ENCODE measurements at regions of chr18 and their contacts with region 1.

Region 1: GRCh38 chr18:2822213-2822921 is 24.4 kb upstream of the EMILIN2 start:
- DNase-seq: no peak
- ATAC-seq: no peak
- H3K4me3 ChIP-seq: no peak overlapping the region
- H3K4me3 Mint-ChIP-seq: no peak overlapping the region
- H3K27ac ChIP-seq: no peak overlapping the region
- H3K27ac Mint-ChIP-seq: no peak overlapping the region
- H3K4me1 ChIP-seq: no peaks in the 10 kb centered on the region
- H3K4me1 Mint-ChIP-seq: no peaks in the 10 kb centered on the region
- H3K27me3 ChIP-seq: peaks cover 0 to 3% of the 10 kb centered on the region in 2 experiments
- H3K27me3 Mint-ChIP-seq: no peaks in the 10 kb centered on the region

Region 2: DNA sequence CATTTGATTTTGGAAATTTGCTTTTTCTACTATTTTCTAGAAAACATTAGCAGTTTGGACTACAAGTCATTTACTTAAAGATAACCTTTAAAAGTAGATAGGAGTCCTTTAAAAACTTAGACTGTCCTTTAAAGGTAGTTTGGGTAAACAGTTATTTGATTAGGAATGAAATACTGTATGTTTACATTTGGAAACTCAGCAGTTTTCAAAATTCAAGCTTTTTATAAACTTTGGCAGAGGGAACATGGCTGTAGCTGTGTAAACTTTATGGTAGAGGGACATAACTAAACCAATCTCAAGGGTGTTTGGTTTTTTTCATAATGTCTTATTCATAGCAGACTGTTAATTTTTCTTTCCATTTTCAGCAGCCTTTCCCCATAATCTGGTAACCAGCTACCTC is 76.1 kb before region 1 on chr18:
- CTCF ChIA-PET with region 1: no interaction called
- POLR2A ChIA-PET with region 1: no interaction called
- DNase-seq: no peak
- ATAC-seq: no peak
- H3K4me3 ChIP-seq: no peak overlapping the region
- H3K4me3 Mint-ChIP-seq: no peak overlapping the region
- H3K27ac ChIP-seq: peak overlapping the region; percentile 2
- H3K27ac Mint-ChIP-seq: peak overlapping the region; percentile 18 to 74
- H3K4me1 ChIP-seq: no peaks in the 10 kb centered on the region
- H3K4me1 Mint-ChIP-seq: peaks cover 30 to 50% (median 38%) of the 10 kb centered on the region in 3 donors
- H3K27me3 ChIP-seq: no peaks in the 10 kb centered on the region
- H3K27me3 Mint-ChIP-seq: no peaks in the 10 kb centered on the region

Region 3: DNA sequence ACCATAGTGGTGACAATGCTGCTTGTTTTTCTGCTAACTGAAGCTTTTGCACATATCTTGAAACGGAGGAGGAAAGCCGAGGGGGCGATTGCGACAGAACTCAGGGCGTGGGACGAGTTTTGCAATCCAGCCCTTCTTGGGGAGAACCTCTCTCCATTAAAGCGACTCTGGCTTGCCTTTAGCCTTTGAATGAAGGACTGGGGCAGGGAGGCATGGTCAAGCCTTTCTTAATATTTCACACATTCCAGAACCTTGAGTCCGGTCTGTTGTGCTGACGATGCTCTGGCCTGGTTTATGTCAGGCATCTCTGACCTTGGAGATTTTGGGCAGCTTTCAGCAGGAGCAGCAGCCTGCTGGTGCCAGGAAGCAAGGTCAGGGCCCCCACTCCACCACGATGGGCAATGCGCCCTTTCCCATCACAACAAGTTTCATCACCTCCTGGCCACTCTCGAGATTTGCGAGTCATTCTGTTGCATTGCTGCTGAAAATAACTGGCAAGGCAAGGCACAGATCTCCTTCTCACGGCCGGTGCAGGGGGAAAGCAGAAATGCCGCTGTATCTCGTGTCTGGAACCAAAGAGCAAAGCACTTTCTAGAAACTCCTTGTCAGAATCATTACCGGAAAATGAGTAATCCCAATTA is 35.2 kb after region 1 on chr18:
- CTCF ChIA-PET with region 1: no interaction called
- POLR2A ChIA-PET with region 1: interaction called in 1 of 2 experiments, 11 read pairs
- DNase-seq: peak in 1 of 35 experiments; percentile 30
- ATAC-seq: no peak
- H3K4me3 ChIP-seq: no peak overlapping the region
- H3K4me3 Mint-ChIP-seq: no peak overlapping the region
- H3K27ac ChIP-seq: no peak overlapping the region
- H3K27ac Mint-ChIP-seq: no peak overlapping the region
- H3K4me1 ChIP-seq: peaks cover 3 to 12% of the 10 kb centered on the region in 2 experiments
- H3K4me1 Mint-ChIP-seq: peaks cover 0 to 7% (median 6%) of the 10 kb centered on the region in 3 donors
- H3K27me3 ChIP-seq: peaks cover 0 to 15% of the 10 kb centered on the region in 2 experiments
- H3K27me3 Mint-ChIP-seq: peaks cover 3 to 12% of the 10 kb centered on the region in 2 donors

Measured in T-cell (primary cell).